CD8-positive, alpha-beta T cell (primary cell): ENCODE measurements at regions of chr11 and their contacts with region 1.

Region 1: GRCh38 chr11:113923572-113923971 is 19.0 kb downstream of the HTR3B start:
- DNase-seq: no peak
- ATAC-seq: no peak
- H3K4me3 ChIP-seq: no peak overlapping the region
- H3K4me3 Mint-ChIP-seq: no peak overlapping the region
- H3K27ac ChIP-seq: no peak overlapping the region
- H3K27ac Mint-ChIP-seq: no peak overlapping the region
- H3K4me1 ChIP-seq: no peaks in the 10 kb centered on the region
- H3K4me1 Mint-ChIP-seq: no peaks in the 10 kb centered on the region
- H3K27me3 ChIP-seq: peaks cover 0 to 5% of the 10 kb centered on the region in 2 experiments
- H3K27me3 Mint-ChIP-seq: peaks cover 17% of the 10 kb centered on the region
- CTCF ChIP-seq: no peak

Region 2: GRCh38 chr11:113947994-113948393 is 24.4 kb after region 1 on chr11:
- CTCF ChIA-PET with region 1: no interaction called
- POLR2A ChIA-PET with region 1: no interaction called
- intact Hi-C with region 1: loop called in 1 of 2 experiments (anchors 1 kb)
- DNase-seq: no peak
- ATAC-seq: no peak
- H3K4me3 ChIP-seq: no peak overlapping the region
- H3K4me3 Mint-ChIP-seq: no peak overlapping the region
- H3K27ac ChIP-seq: no peak overlapping the region
- H3K27ac Mint-ChIP-seq: no peak overlapping the region
- H3K4me1 ChIP-seq: no peaks in the 10 kb centered on the region
- H3K4me1 Mint-ChIP-seq: no peaks in the 10 kb centered on the region
- H3K27me3 ChIP-seq: peaks cover 0 to 5% of the 10 kb centered on the region in 2 experiments
- H3K27me3 Mint-ChIP-seq: peaks cover 27% of the 10 kb centered on the region
- CTCF ChIP-seq: no peak